Testis (tissue), 5 donors: ENCODE measurements at regions of chr17 and their contacts with region 1.

Region 1: DNA sequence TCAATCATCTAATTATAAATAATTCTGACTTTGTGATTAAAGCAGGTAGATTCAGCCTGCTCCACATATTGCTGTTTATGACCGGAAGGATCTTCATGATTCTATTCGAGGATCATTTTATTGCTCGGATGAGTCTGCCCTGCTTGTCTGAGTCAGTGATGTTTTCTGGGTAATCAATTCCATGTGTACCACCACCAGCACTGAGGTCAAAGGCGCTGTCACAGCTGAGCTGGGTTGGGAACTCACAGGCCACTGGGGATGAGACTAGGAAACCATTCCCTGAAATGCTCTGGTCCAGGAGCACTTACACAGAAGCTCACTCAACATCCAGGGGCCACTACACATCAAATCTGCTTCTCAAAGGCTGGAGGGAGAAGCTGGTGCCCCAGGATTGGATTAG is 30.4 kb upstream of the ERN1 start:
- DNase-seq: no peak
- H3K4me3 ChIP-seq: no peak overlapping the region
- H3K27ac ChIP-seq: no peak overlapping the region
- H3K4me1 ChIP-seq: peaks cover 14% of the 10 kb centered on the region
- H3K27me3 ChIP-seq: no peaks in the 10 kb centered on the region
- CTCF ChIP-seq: no peak
- POLR2A ChIP-seq: no peak

Region 2: GRCh38 chr17:64278614-64279013 is 118.2 kb after region 1 on chr17:
- intact Hi-C with region 1: loop called (anchors 10 kb)
- DNase-seq: no peak
- H3K4me3 ChIP-seq: no peak overlapping the region
- H3K27ac ChIP-seq: no peak overlapping the region
- H3K4me1 ChIP-seq: peaks cover 7% of the 10 kb centered on the region
- H3K27me3 ChIP-seq: no peaks in the 10 kb centered on the region
- CTCF ChIP-seq: no peak
- POLR2A ChIP-seq: no peak